Naive thymus-derived CD4-positive, alpha-beta T cell (primary cell): ENCODE measurements at regions of chr18 and their contacts with region 1.

Region 1: DNA sequence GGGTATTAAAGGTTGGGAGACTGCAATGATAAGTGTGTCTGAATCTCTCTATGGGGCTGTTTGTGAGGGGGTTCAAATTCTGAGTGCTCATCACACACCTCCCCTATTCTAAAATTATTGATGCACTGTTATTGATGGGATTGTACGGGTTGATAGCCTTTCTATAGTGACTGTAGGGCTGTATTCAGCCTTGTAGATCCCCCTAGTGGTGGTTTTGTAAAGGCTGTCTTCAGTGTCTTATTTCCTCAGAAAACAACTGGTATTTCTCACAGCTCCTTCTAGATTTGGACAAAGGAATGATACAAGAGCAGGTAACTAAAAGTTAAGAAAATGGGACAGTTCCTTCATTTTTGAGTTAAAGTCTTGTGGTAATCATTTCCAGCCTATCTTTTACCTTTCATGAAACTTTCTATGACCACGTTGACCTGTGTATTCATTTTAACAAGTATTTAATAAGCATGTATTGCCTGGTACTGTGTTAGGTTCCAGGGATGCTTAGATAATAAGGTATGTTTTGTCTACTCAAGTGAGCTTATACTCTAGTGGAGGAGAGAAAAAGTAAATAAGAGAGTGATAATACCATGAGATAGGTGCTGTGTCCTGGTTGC is 21.2 kb downstream of the SMAD4 start:
- DNase-seq: peak in 7 of 9 donors; percentile 47 to 71 (median 62)
- ATAC-seq: peak; percentile 95
- H3K4me3 ChIP-seq: no peak overlapping the region
- H3K4me3 Mint-ChIP-seq: no peak overlapping the region
- H3K27ac ChIP-seq: no peak overlapping the region
- H3K27ac Mint-ChIP-seq: peak overlapping the region in 8 of 9 donors; percentile 3 to 80 (median 36)
- H3K4me1 ChIP-seq: peaks cover 8% of the 10 kb centered on the region in 2 donors
- H3K4me1 Mint-ChIP-seq: peaks cover 17 to 55% (median 42%) of the 10 kb centered on the region in 7 donors
- H3K27me3 ChIP-seq: no peaks in the 10 kb centered on the region
- H3K27me3 Mint-ChIP-seq: no peaks in the 10 kb centered on the region

Region 2: DNA sequence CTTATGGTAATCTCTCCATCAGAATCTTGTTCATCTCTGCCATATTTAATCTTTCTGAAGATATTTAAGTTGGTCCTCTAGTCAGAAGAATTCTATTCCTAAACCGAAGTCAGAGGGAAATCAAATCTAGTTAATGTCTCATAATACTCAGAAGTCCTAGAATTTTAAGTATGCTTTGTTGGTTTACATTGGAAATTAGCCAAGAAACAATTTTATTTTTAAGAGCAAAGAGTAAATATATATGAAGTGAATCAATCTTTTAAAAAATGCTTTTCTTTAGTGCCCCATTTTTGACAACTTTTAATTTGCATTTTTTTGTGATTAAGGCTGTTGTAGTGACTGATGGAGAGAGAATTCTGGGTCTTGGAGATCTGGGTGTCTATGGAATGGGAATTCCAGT is 134.2 kb before region 1 on chr18:
- CTCF ChIA-PET with region 1: interaction called, 8 read pairs
- POLR2A ChIA-PET with region 1: no interaction called
- intact Hi-C with region 1: loop called in 1 of 2 experiments (anchors 5 kb)
- DNase-seq: no peak
- ATAC-seq: no peak
- H3K4me3 ChIP-seq: no peak overlapping the region
- H3K4me3 Mint-ChIP-seq: no peak overlapping the region
- H3K27ac ChIP-seq: no peak overlapping the region
- H3K27ac Mint-ChIP-seq: peak overlapping the region in 1 of 9 donors; percentile 18
- H3K4me1 ChIP-seq: no peaks in the 10 kb centered on the region
- H3K4me1 Mint-ChIP-seq: peaks cover 1 to 11% (median 5%) of the 10 kb centered on the region in 7 donors
- H3K27me3 ChIP-seq: no peaks in the 10 kb centered on the region
- H3K27me3 Mint-ChIP-seq: no peaks in the 10 kb centered on the region

Region 3: DNA sequence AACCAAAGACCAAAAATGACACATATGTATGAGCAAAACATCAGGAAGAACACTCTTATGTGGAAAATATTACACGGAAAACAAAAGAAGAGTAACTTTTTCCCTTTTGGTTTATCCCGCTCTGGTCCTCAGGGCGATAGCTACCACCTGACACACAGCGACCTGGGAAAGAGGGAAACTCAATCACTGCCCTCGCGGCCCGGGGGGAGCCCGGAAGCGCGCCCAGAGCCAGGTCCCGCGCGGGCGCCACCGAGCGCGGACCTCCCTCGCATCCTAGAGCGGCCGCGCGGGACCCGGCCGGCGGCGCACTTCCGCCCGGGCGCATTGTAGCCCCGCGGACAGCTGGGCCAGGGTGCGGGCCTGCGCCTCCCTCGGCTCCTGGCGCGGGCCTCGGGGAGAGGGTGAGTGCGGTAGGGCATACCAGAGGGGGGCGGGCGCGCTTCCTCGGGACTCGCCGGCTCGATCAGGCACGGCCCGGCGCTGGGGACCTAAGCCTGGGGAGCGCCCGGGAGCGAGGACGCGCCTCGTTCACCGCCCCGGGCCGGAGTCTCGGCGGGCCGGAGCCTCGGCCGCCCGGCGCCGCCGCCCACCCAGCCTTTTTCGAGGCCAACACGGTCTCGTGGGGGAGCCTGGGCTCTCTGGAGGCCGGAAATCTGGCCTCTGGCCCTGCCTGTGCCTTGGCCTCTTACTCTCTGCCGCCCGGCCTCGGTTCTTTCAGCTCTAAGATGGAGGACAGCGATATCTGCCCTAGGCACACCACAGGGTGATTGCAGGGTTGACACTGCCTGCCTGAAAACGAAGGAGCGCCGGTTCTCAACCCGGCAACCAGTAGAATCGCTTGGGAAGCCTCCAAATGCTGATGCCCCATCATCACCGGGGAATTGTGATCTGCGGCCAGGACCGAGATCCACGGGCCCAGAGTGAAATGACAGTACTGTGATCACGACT is 83.2 kb before region 1 on chr18 and contains the start of gene ELAC1:
- CTCF ChIA-PET with region 1: no interaction called
- POLR2A ChIA-PET with region 1: interaction called, 4 read pairs
- intact Hi-C with region 1: loop called (anchors 1 kb)
- DNase-seq: peak; percentile 48 to 75 (median 65)
- ATAC-seq: peak; percentile 93
- H3K4me3 ChIP-seq: peak within 1 kb of the TSS; percentile 80
- H3K4me3 Mint-ChIP-seq: peak within 1 kb of the TSS; percentile 86 to 98 (median 94)
- H3K27ac ChIP-seq: peak within 1 kb of the TSS; percentile 90
- H3K27ac Mint-ChIP-seq: peak within 1 kb of the TSS; percentile 77 to 95 (median 92)
- H3K4me1 ChIP-seq: peaks cover 8 to 13% of the 10 kb centered on the region in 2 donors
- H3K4me1 Mint-ChIP-seq: peaks cover 15 to 35% (median 29%) of the 10 kb centered on the region in 7 donors
- H3K27me3 ChIP-seq: no peaks in the 10 kb centered on the region
- H3K27me3 Mint-ChIP-seq: no peaks in the 10 kb centered on the region
- total RNA-seq, gene ELAC1: 4.3 to 11.2 (median 6.3) TPM

Region 4: GRCh38 chr18:51029694-51030536 is 21.3 kb before region 1 on chr18 and contains the start of gene SMAD4:
- CTCF ChIA-PET with region 1: interaction called, 6 read pairs
- POLR2A ChIA-PET with region 1: interaction called, 5 read pairs
- intact Hi-C with region 1: loop called (anchors 1 kb)
- DNase-seq: peak; percentile 95 to 99 (median 97)
- ATAC-seq: peak; percentile 89
- H3K4me3 ChIP-seq: peak within 1 kb of the TSS; percentile 63
- H3K4me3 Mint-ChIP-seq: peak within 1 kb of the TSS; percentile 96 to 100 (median 99)
- H3K27ac ChIP-seq: peak within 1 kb of the TSS; percentile 81
- H3K27ac Mint-ChIP-seq: peak within 1 kb of the TSS; percentile 95 to 100 (median 98)
- H3K4me1 ChIP-seq: peaks cover 13 to 40% of the 10 kb centered on the region in 2 donors
- H3K4me1 Mint-ChIP-seq: peaks cover 35 to 62% (median 57%) of the 10 kb centered on the region in 7 donors
- H3K27me3 ChIP-seq: no peaks in the 10 kb centered on the region
- H3K27me3 Mint-ChIP-seq: no peaks in the 10 kb centered on the region
- total RNA-seq, gene SMAD4: 82.5 to 170 (median 92.5) TPM

Region 5: DNA sequence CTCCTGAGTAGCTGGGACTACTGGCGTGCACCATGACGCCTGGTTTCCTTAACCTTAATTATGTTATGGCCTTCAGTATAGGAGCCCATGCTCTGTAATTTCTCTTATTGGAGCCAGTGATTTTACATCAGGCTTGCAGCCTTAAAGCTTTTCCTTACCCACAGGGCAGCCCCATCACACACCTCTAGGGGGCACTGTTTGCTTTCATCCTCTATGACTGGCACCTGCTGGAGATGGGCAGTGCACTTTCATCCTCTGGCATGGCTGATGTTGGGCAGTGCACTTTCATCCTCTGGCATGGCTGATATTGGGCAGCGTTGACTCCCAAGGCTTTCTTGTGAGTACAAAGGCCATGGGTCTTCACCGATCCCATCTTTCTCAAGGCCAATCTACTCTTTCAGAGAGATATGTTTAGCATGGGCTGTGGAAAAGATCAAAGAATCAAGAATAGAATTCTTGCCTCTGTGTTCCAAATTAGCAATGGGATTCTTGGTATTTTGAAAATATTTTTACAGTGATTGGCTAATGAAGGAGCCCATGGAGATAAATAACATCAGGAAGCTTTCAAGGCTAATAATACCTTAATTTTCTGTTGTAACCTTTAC is 226.9 kb after region 1 on chr18:
- CTCF ChIA-PET with region 1: no interaction called
- POLR2A ChIA-PET with region 1: no interaction called
- intact Hi-C with region 1: no loop called
- DNase-seq: peak in 1 of 9 donors; percentile 34
- ATAC-seq: peak; percentile 47
- H3K4me3 ChIP-seq: no peak overlapping the region
- H3K4me3 Mint-ChIP-seq: no peak overlapping the region
- H3K27ac ChIP-seq: no peak overlapping the region
- H3K27ac Mint-ChIP-seq: no peak overlapping the region
- H3K4me1 ChIP-seq: no peaks in the 10 kb centered on the region
- H3K4me1 Mint-ChIP-seq: peaks cover 0 to 1% (median 0%) of the 10 kb centered on the region in 7 donors
- H3K27me3 ChIP-seq: no peaks in the 10 kb centered on the region
- H3K27me3 Mint-ChIP-seq: peaks cover 0 to 1% (median 0%) of the 10 kb centered on the region in 5 donors